Activated B cell treated with CpG ODN at 0.5 μM for 24 hours (primary cell): ENCODE measurements at regions of chr9 and their contacts with region 1.

Region 1: DNA sequence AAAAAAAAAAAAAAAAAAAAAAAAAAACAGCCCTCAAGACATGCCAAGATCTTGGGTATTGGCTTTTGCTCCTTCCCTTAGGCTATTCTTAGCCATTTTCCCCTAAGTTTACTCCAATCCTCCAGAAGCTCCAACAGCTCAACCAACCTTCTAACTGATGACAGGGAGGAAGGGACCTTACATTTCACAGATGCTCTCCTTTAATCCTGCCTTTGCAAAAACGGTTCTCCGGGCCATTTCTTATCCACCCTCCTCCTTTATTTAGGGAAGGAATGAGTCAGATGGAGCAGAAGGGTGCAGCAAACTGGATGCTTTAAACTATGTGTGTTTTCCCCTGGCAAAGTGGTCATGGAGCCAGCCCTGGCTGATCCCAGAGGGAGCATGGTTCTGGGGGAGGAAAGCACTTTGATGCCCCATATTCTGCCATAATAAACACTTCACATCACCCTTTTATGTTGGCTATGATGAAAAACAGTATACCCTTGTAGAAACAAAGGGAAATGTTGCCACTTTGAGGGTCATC is 369.4 kb upstream of the DMAC1 start:
- DNase-seq: no peak
- ATAC-seq: no peak
- H3K4me3 Mint-ChIP-seq: no peak overlapping the region
- H3K27ac Mint-ChIP-seq: no peak overlapping the region
- H3K4me1 Mint-ChIP-seq: no peaks in the 10 kb centered on the region
- H3K27me3 Mint-ChIP-seq: peaks cover 5% of the 10 kb centered on the region
- CTCF ChIP-seq: no peak

Region 2: GRCh38 chr9:7961076-7961475 is 207.9 kb before region 1 on chr9:
- CTCF ChIA-PET with region 1: no interaction called
- POLR2A ChIA-PET with region 1: interaction called, 16 read pairs
- intact Hi-C with region 1: no loop called
- DNase-seq: no peak
- ATAC-seq: no peak
- H3K4me3 Mint-ChIP-seq: no peak overlapping the region
- H3K27ac Mint-ChIP-seq: no peak overlapping the region
- H3K4me1 Mint-ChIP-seq: no peaks in the 10 kb centered on the region
- H3K27me3 Mint-ChIP-seq: no peaks in the 10 kb centered on the region
- CTCF ChIP-seq: no peak

Region 3: GRCh38 chr9:8337834-8338766 is 169.1 kb after region 1 on chr9:
- CTCF ChIA-PET with region 1: no interaction called
- POLR2A ChIA-PET with region 1: no interaction called
- intact Hi-C with region 1: no loop called
- DNase-seq: no peak
- ATAC-seq: no peak
- H3K4me3 Mint-ChIP-seq: no peak overlapping the region
- H3K27ac Mint-ChIP-seq: no peak overlapping the region
- H3K4me1 Mint-ChIP-seq: no peaks in the 10 kb centered on the region
- H3K27me3 Mint-ChIP-seq: no peaks in the 10 kb centered on the region
- CTCF ChIP-seq: no peak